ENCODE measurements at regions of chr22 and their contacts with region 1.

Region 1: GRCh38 chr22:36636916-36637315 is 66.6 kb downstream of the CACNG2 start:
- DNase-seq: no peak
- H3K4me3 ChIP-seq: no peak overlapping the region
- H3K27ac ChIP-seq: no peak overlapping the region
- H3K4me1 ChIP-seq: no peaks in the 10 kb centered on the region
- H3K27me3 ChIP-seq: peaks cover 0 to 6% of the 10 kb centered on the region in 2 experiments
- CTCF ChIP-seq: no peak
- POLR2A ChIP-seq: no peak

Region 2: GRCh38 chr22:36368359-36368983 is 268.4 kb before region 1 on chr22:
- CTCF ChIA-PET with region 1: no interaction called
- POLR2A ChIA-PET with region 1: no interaction called
- dilution Hi-C with region 1: no loop called
- intact Hi-C with region 1: no loop called
- DNase-seq: peak; percentile 76
- H3K4me3 ChIP-seq: peak overlapping the region in 1 of 3 experiments; percentile 21
- H3K27ac ChIP-seq: peak overlapping the region; percentile 91
- H3K4me1 ChIP-seq: peaks cover 96% of the 10 kb centered on the region
- H3K27me3 ChIP-seq: no peaks in the 10 kb centered on the region
- CTCF ChIP-seq: peak in 1 of 2 donors; percentile 7
- POLR2A ChIP-seq: peak; percentile 58

Region 3: DNA sequence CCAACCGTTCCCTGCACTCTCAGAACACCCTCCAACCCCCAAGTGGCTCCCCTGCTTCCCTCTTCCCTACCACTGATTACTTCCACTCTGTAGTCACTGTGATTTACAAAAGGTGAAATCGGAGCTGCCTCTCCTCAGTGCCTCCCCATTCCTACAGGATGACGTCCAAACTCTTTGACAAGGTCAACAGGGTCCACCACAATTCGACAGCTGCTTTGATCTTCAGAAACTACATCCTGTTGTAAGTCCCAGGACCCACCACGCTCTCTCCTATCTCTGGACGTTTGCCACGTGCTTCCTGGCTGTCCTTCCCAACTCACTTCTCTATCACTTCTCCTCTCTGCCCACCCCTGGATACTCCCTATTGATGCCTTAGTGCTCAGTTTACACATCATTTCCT is 23.0 kb before region 1 on chr22:
- CTCF ChIA-PET with region 1: no interaction called
- POLR2A ChIA-PET with region 1: no interaction called
- dilution Hi-C with region 1: no loop called
- intact Hi-C with region 1: no loop called
- DNase-seq: no peak
- H3K4me3 ChIP-seq: no peak overlapping the region
- H3K27ac ChIP-seq: no peak overlapping the region
- H3K4me1 ChIP-seq: no peaks in the 10 kb centered on the region
- H3K27me3 ChIP-seq: peaks cover 13 to 17% of the 10 kb centered on the region in 2 experiments
- CTCF ChIP-seq: no peak
- POLR2A ChIP-seq: no peak

Region 4: DNA sequence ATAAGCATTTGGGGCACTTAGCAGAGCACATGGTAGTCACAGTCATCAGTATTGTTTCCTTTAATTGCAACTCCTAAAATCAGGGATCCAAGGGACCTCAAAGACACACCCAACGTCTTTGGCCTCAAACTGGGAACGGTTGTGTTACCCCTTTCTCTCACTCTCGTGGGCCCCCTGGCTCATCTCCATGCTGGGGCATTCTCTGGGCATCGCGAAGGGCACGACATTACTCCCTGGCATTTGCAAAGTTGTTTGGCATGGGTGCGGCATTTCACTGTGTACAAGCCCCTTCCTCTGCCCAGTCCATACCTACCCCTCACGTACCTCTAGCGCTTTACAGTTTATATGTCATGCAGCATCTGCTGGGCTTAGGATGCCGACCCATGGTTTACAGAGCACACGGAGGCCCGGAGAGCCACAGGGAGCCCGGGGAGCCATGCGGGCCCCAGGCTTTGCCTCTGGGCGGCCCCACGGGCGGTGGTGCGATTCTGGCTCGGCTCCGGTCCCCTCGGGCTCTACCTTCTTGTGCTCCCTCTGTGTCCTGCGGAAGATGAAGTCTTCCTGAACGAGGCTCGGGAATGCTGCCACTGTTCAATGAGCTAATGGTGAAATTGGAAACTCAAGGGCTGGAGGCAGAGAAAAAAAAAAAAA is 88.6 kb after region 1 on chr22:
- CTCF ChIA-PET with region 1: no interaction called
- POLR2A ChIA-PET with region 1: no interaction called
- dilution Hi-C with region 1: no loop called
- intact Hi-C with region 1: loop called (anchors 10 kb)
- DNase-seq: no peak
- H3K4me3 ChIP-seq: no peak overlapping the region
- H3K27ac ChIP-seq: no peak overlapping the region
- H3K4me1 ChIP-seq: no peaks in the 10 kb centered on the region
- H3K27me3 ChIP-seq: peaks cover 3 to 10% of the 10 kb centered on the region in 2 experiments
- CTCF ChIP-seq: no peak
- POLR2A ChIP-seq: no peak

Region 5: GRCh38 chr22:36823186-36823839 is 186.4 kb after region 1 on chr22:
- CTCF ChIA-PET with region 1: no interaction called
- POLR2A ChIA-PET with region 1: no interaction called
- dilution Hi-C with region 1: no loop called
- intact Hi-C with region 1: no loop called
- DNase-seq: peak; percentile 71
- H3K4me3 ChIP-seq: no peak overlapping the region
- H3K27ac ChIP-seq: peak overlapping the region; percentile 18
- H3K4me1 ChIP-seq: peaks cover 9% of the 10 kb centered on the region
- H3K27me3 ChIP-seq: peaks cover 7% of the 10 kb centered on the region in 2 experiments
- CTCF ChIP-seq: no peak
- POLR2A ChIP-seq: no peak